Activated CD4-positive, alpha-beta T cell treated with anti-CD3 and anti-CD28 coated beads, Interleukin-2, amount 10 ng/mL, durations not matched to agents 24 days and 14 days (primary cell): ENCODE measurements at regions of chr11 and their contacts with region 1.

Region 1: DNA sequence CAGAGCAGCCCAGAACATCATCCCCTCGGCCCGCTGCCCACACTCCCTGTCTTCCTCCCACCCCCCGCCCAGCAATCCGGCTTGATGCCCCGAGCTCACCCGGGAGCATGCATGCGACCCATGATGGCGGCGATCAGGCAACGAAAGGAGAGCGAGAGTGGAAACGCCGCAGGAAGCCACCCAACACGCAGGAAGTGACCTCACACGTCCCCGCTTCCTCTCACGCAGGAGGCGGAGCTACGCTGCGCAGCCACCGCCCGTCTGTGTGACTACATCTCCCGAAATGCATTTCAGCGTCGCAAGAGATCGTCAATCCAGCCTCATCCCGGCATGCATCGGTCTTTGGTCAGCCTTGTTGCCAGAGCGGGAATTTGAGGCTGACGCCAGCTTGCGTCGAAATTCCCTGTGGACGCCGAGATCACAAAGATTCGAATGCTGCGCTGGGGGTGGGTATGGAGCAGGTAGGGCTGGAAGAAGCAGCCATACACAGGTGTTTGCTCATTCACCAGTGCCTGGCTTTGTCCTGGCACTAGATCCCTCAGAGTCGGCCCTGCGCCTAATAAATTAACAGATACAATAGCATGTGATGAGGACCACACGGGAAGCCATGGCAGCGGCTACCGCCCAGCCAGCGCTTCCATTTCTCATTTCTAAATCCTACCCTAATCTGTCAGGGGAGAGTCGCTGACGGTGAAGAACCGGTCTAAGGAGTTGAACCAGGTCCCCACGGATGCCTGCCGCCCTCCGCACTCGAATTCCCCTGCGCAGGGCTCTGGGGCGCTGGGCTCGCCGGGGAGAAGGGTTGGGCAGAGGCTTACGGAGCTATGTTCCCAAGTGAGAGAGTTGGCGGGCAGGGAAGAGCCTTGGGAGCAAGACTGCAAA is at the start of gene RPS13:
- DNase-seq: peak; percentile 98
- H3K4me3 Mint-ChIP-seq: peak within 1 kb of the TSS; percentile 92
- H3K27ac Mint-ChIP-seq: peak within 1 kb of the TSS; percentile 98
- H3K4me1 Mint-ChIP-seq: peaks cover 24% of the 10 kb centered on the region
- H3K27me3 Mint-ChIP-seq: no peaks in the 10 kb centered on the region
- total RNA-seq, gene RPS13: 1,328 and 1,337 TPM in 2 replicates

Region 2: GRCh38 chr11:16902781-16903378 is 174.9 kb before region 1 on chr11:
- intact Hi-C with region 1: loop called (anchors 1 kb)
- DNase-seq: peak; percentile 63
- H3K4me3 Mint-ChIP-seq: peak overlapping the region; percentile 46
- H3K27ac Mint-ChIP-seq: peak overlapping the region; percentile 97
- H3K4me1 Mint-ChIP-seq: peaks cover 42% of the 10 kb centered on the region
- H3K27me3 Mint-ChIP-seq: no peaks in the 10 kb centered on the region

Region 3: DNA sequence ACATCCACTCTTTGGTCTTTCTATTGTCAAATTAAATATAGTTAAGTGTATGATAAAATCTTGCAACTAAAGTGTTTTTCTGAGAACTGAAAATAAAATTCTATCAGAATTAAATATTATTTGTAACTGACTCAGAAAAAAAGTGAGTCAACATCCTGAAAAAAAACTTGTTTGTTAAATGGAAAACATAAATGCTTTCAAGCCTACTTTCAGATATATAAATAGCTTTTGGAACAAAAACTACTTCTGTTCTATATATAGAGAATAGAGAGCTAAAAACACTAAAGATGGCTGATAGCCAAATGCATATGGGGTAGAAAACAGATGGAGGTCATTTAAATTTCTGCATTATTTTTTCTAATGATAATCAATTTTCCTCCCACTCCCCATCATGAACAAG is 68.2 kb after region 1 on chr11:
- intact Hi-C with region 1: loop called (anchors 5 kb)
- DNase-seq: no peak
- H3K4me3 Mint-ChIP-seq: no peak overlapping the region
- H3K27ac Mint-ChIP-seq: peak overlapping the region; percentile 53
- H3K4me1 Mint-ChIP-seq: peaks cover 13% of the 10 kb centered on the region
- H3K27me3 Mint-ChIP-seq: no peaks in the 10 kb centered on the region

Region 4: DNA sequence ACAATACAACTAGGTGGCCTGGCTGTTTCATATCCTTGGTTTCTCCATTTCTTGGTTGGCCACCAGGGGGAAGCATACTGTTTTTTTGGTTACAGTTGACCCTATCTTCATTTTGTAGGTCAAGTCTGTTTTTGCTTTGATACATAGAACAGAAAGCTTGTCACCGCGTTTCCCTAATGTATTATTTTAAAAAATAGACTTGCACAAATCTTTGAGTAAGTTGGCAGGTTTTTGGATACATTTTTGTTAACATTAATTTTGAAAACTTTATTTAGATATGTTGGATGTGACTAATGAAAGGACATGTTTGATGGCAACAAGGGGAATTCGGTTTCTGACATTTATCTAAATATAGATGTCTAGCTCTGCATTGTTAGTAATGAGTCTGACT is 276.8 kb after region 1 on chr11:
- intact Hi-C with region 1: loop called (anchors 5 kb)
- DNase-seq: peak; percentile 90
- H3K4me3 Mint-ChIP-seq: peak overlapping the region; percentile 93
- H3K27ac Mint-ChIP-seq: peak overlapping the region; percentile 16
- H3K4me1 Mint-ChIP-seq: peaks cover 29% of the 10 kb centered on the region
- H3K27me3 Mint-ChIP-seq: peaks cover 34% of the 10 kb centered on the region